ENCODE measurements at regions of chr4 and their contacts with region 1.

Region 1: DNA sequence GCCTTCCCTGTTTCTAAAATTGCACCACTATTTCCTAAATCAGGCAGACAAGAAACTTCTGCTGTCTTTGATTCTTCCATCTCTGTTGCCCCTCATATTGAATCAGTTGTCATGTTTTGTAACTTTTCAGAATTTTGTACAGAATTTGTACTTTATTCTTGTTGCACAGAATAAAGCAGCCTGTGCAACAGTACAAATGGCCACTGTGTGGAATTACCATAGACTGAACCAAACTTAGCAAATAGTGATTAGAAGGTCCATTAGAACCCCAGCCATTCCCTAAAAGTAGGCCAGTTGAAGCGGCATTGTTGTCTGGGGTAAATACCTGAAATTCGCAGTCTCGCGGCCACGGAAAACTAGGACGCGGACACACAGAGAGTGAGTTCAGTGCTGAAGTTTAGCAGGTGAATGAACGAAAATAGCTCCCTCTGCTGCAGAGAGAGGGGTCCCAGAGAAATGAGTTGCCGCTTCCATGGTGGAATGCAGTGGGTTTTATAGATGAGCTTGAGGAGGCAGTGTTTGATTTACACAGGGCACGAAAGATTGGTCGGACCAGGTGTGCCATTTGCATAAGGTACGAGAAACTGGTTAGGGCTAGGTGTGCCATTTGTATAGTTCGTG is 71.8 kb downstream of the C4orf33 start:
- DNase-seq: peak in 1 of 2 experiments; percentile 51
- H3K4me3 ChIP-seq: no peak overlapping the region
- H3K27ac ChIP-seq: no peak overlapping the region
- H3K4me1 ChIP-seq: no peaks in the 10 kb centered on the region
- H3K27me3 ChIP-seq: no peaks in the 10 kb centered on the region
- CTCF ChIP-seq: peak; percentile 16 to 60 (median 55)
- EP300 ChIP-seq: no peak
- POLR2A ChIP-seq: no peak
- RAD21 ChIP-seq: peak; percentile 62 to 69

Region 2: GRCh38 chr4:128847082-128847724 is 320.5 kb before region 1 on chr4:
- CTCF ChIA-PET with region 1: no interaction called
- POLR2A ChIA-PET with region 1: no interaction called
- DNase-seq: no peak
- H3K4me3 ChIP-seq: no peak overlapping the region
- H3K27ac ChIP-seq: no peak overlapping the region
- H3K4me1 ChIP-seq: peaks cover 0 to 7% (median 0%) of the 10 kb centered on the region in 4 experiments; a peak in 3 of 7 replicates
- H3K27me3 ChIP-seq: no peaks in the 10 kb centered on the region
- CTCF ChIP-seq: no peak
- EP300 ChIP-seq: no peak
- POLR2A ChIP-seq: no peak
- RAD21 ChIP-seq: no peak

Region 3: DNA sequence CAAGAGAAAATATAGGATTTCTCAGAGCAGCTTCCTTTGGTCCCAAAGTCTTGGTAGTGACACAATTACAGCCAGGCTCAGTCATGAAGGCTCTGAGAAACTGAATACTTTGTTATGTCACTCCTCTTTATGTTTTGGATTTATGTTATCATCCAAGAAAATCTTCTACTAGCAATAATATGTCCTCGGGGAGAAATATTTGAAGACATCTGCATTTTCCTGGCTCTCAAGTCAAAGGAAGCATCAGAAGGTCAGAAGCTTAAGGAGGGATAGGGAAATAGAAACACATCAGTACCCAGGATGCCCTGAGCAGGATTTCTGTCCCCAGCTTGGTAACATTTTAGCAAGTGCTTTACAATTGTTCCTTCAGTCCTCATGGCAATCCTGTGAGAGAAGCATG is 17.8 kb before region 1 on chr4:
- CTCF ChIA-PET with region 1: interaction called, 13 read pairs
- POLR2A ChIA-PET with region 1: no interaction called
- DNase-seq: no peak
- H3K4me3 ChIP-seq: no peak overlapping the region
- H3K27ac ChIP-seq: no peak overlapping the region
- H3K4me1 ChIP-seq: no peaks in the 10 kb centered on the region
- H3K27me3 ChIP-seq: no peaks in the 10 kb centered on the region
- CTCF ChIP-seq: no peak
- EP300 ChIP-seq: no peak
- POLR2A ChIP-seq: no peak
- RAD21 ChIP-seq: no peak

Measured in H1 (cell line).